A549 (cell line): ENCODE measurements at regions of chr11 and their contacts with region 1.

Region 1: GRCh38 chr11:72413914-72414628 is 20.3 kb downstream of the CLPB start:
- DNase-seq: peak; percentile 76 to 81
- ATAC-seq: peak; percentile 83 to 92
- H3K4me3 ChIP-seq: no peak overlapping the region
- H3K27ac ChIP-seq: 0 out of 6 replicates have a peak overlapping the region, but pooled peaks of 1 of the 2 experiments have one; percentile 13
- H3K4me1 ChIP-seq: peaks cover 4% of the 10 kb centered on the region; the same call in 2 of the 3 replicates
- CTCF ChIP-seq: peak; percentile 92
- EP300 ChIP-seq: no peak
- POLR2A ChIP-seq: no peak
- RAD21 ChIP-seq: peak; percentile 82 to 83

Region 2: GRCh38 chr11:72132646-72133045 is 281.4 kb before region 1 on chr11:
- CTCF ChIA-PET with region 1: no interaction called
- POLR2A ChIA-PET with region 1: no interaction called
- DNase-seq: no peak
- ATAC-seq: no peak
- H3K4me3 ChIP-seq: no peak overlapping the region
- H3K27ac ChIP-seq: no peak overlapping the region
- H3K4me1 ChIP-seq: no peaks in the 10 kb centered on the region
- CTCF ChIP-seq: no peak
- EP300 ChIP-seq: no peak
- POLR2A ChIP-seq: no peak
- RAD21 ChIP-seq: no peak

Region 3: GRCh38 chr11:72238040-72238450 is 176.0 kb before region 1 on chr11:
- CTCF ChIA-PET with region 1: interaction called, 11 read pairs
- POLR2A ChIA-PET with region 1: interaction called, 3 read pairs
- DNase-seq: peak; percentile 82 to 92
- ATAC-seq: peak; percentile 70 to 86
- H3K4me3 ChIP-seq: no peak overlapping the region
- H3K27ac ChIP-seq: no peak overlapping the region
- H3K4me1 ChIP-seq: peaks cover 12% of the 10 kb centered on the region
- CTCF ChIP-seq: peak; percentile 71
- EP300 ChIP-seq: no peak
- POLR2A ChIP-seq: no peak
- RAD21 ChIP-seq: peak; percentile 63 to 65

Region 4: DNA sequence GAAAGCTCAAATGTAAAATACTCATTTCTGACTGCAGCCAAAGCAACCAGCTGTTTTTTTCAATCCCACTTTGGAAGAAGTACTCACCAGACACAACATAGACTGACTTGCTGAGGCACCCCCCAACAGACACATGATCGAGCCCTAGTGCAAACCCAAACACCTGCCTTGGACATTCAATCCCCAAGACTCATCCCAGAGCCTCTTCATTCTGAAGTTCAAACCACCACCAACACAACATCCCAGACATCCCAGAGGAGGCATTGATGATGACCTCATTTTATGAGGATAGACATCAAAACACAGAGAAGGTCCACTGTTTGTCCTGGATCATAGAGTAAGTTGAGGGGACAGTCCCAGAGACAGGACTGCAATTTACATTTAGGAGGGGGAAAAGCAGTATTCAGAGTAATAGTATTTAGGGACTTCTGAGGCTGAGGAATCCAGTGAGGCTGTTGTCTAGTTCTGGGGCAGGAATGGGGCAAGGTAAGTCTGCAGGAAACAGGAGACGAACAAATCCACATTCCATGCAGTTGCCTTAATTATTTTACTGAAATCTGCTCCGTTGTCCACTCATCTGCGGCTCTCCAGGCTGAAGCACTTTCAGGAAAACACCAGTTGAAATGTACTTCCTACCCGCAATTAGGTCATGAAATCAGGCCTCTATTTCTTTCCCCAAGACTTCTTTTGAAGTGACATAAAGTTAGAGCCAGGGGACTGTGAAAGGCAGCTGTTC is 34.5 kb before region 1 on chr11:
- CTCF ChIA-PET with region 1: interaction called, 10 read pairs
- POLR2A ChIA-PET with region 1: no interaction called
- DNase-seq: no peak
- ATAC-seq: no peak
- H3K4me3 ChIP-seq: no peak overlapping the region
- H3K27ac ChIP-seq: no peak overlapping the region
- H3K4me1 ChIP-seq: no peaks in the 10 kb centered on the region
- CTCF ChIP-seq: no peak
- EP300 ChIP-seq: no peak
- POLR2A ChIP-seq: no peak
- RAD21 ChIP-seq: no peak

Region 5: DNA sequence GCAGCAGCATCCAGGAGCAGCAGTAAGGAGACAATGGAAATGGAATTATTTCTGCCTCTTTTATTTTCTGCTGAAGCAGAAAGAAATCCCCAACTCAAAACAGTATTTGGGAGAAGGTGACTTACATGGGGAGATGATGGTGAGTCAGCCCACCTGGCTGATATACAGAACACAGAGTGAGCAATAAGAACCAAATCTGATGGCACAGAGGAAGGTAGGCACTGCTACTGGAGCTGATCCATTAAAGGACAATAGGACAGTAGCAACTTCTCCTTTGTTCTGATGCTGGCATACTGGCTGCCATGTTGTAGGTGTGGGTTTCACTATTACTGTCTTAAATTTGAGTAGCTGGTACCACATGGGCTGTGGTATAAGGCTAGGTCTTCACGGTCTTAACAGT is 25.0 kb before region 1 on chr11:
- CTCF ChIA-PET with region 1: interaction called, 57 read pairs
- POLR2A ChIA-PET with region 1: no interaction called
- DNase-seq: no peak
- ATAC-seq: no peak
- H3K4me3 ChIP-seq: no peak overlapping the region
- H3K27ac ChIP-seq: no peak overlapping the region
- H3K4me1 ChIP-seq: no peaks in the 10 kb centered on the region
- CTCF ChIP-seq: no peak
- EP300 ChIP-seq: no peak
- POLR2A ChIP-seq: no peak
- RAD21 ChIP-seq: no peak

Region 6: DNA sequence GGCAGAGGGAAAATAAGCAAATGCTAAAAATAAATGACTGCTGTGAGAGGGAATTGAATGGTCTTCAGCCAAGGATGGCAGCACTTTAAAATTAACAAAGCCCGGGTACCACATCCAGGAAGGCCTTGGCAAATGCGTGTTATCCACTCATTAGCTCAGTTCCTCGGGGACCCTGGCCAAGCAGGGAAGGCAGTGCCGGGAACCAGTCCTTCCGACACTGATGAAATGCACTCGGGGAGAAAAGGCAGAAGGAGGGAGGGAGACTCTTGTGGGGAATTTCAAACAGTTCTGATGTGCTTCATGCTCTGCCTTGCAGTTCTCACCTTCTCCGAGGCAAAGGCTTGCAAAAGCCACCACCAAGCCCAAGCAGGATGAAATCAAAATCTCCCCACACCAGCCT is 18.0 kb before region 1 on chr11:
- CTCF ChIA-PET with region 1: interaction called, 57 read pairs
- POLR2A ChIA-PET with region 1: no interaction called
- DNase-seq: no peak
- ATAC-seq: no peak
- H3K4me3 ChIP-seq: no peak overlapping the region
- H3K27ac ChIP-seq: no peak overlapping the region
- H3K4me1 ChIP-seq: no peaks in the 10 kb centered on the region
- CTCF ChIP-seq: no peak
- EP300 ChIP-seq: no peak
- POLR2A ChIP-seq: no peak
- RAD21 ChIP-seq: no peak

Region 7: GRCh38 chr11:72425053-72425980 is 11.2 kb after region 1 on chr11:
- CTCF ChIA-PET with region 1: interaction called, 256 read pairs
- POLR2A ChIA-PET with region 1: no interaction called
- DNase-seq: no peak
- ATAC-seq: no peak
- H3K4me3 ChIP-seq: no peak overlapping the region
- H3K27ac ChIP-seq: no peak overlapping the region
- H3K4me1 ChIP-seq: peaks cover 13% of the 10 kb centered on the region; the same call in 2 of the 3 replicates
- CTCF ChIP-seq: no peak
- EP300 ChIP-seq: no peak
- POLR2A ChIP-seq: no peak
- RAD21 ChIP-seq: no peak

Region 8: GRCh38 chr11:72430741-72431570 is 16.9 kb after region 1 on chr11:
- CTCF ChIA-PET with region 1: interaction called, 256 read pairs
- POLR2A ChIA-PET with region 1: no interaction called
- DNase-seq: peak; percentile 64 to 66
- ATAC-seq: peak; percentile 36 to 61; a peak in 5 of 6 replicates
- H3K4me3 ChIP-seq: no peak overlapping the region
- H3K27ac ChIP-seq: no peak overlapping the region
- H3K4me1 ChIP-seq: 0 out of 3 replicates have a peak, but pooled peaks cover 3% of the 10 kb centered on the region
- CTCF ChIP-seq: peak; percentile 78
- EP300 ChIP-seq: no peak
- POLR2A ChIP-seq: no peak
- RAD21 ChIP-seq: peak; percentile 82 to 87

Region 9: GRCh38 chr11:72478659-72479058 is 64.6 kb after region 1 on chr11:
- CTCF ChIA-PET with region 1: no interaction called
- POLR2A ChIA-PET with region 1: no interaction called
- DNase-seq: no peak
- ATAC-seq: no peak
- H3K4me3 ChIP-seq: no peak overlapping the region
- H3K27ac ChIP-seq: no peak overlapping the region
- H3K4me1 ChIP-seq: 0 out of 3 replicates have a peak, but pooled peaks cover 3% of the 10 kb centered on the region
- CTCF ChIP-seq: no peak
- EP300 ChIP-seq: no peak
- POLR2A ChIP-seq: no peak
- RAD21 ChIP-seq: no peak

Region 10: DNA sequence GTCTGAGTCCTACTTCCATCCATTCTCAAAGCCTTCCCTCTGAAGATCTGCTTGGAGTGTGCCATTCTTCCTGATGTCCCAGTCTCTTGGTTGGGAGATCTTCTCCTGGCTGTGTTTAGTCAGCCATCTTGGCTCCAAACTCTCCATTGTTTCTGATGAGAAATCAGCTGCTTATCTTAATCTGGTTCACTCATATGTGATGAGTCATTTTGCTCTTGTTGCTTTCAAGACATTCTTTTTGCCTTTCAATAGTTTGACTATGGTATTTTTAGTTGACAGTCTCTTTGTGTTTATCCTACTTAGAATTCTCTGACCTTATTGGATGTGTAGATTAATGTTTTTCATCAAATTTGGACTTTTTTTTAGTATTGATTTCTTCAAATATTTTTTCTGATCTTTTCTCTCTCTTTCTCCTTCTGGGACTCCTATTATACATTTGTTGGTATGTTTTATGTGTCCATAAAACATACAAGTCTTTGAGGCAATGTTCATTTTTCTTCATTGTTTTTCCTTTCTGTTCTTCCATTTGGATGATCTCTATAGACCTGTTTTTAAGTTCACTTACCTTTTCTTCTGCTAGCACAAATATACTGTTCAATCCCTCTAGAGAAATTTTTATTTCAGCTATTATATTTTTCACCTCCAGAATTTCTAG is 97.4 kb after region 1 on chr11:
- CTCF ChIA-PET with region 1: no interaction called
- POLR2A ChIA-PET with region 1: no interaction called
- DNase-seq: peak in 1 of 2 experiments; percentile 14
- ATAC-seq: no peak
- H3K4me3 ChIP-seq: no peak overlapping the region
- H3K27ac ChIP-seq: no peak overlapping the region
- H3K4me1 ChIP-seq: no peaks in the 10 kb centered on the region
- CTCF ChIP-seq: no peak
- EP300 ChIP-seq: no peak
- POLR2A ChIP-seq: no peak
- RAD21 ChIP-seq: no peak

Region 11: DNA sequence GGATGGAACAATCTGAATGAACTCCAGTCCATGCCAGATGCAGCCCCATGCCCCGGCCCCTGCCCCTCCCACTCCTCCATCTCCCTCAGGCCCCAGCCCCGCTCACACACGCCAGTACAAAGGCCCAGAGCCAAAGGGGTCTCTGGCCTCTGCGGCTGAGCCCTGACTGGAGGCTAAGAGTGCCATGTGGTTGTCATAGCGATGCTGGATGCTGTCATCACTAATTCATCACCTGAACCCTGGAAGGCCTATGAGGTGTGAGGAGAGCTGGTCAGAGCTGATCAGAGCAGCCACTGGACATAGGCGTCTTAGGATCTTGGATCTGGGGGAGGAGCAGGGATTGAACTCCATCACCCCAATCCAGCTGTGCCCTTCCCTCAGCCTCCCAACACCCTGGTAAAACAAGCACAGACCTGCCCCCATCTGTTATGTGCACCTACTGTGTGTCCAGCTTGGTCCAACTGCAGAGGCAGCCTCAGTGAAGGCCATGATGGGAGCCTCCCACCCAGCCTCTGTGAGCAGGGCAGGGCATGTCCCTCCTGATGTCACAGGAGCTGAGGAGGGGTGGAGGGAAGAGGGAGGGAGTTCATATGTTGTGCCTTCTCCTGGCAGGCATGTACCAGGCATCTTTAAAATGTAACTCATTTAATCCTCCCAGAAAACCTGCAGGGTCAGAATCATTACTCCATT is 243.5 kb after region 1 on chr11:
- CTCF ChIA-PET with region 1: no interaction called
- POLR2A ChIA-PET with region 1: no interaction called
- DNase-seq: no peak
- ATAC-seq: no peak
- H3K4me3 ChIP-seq: no peak overlapping the region
- H3K27ac ChIP-seq: no peak overlapping the region
- H3K4me1 ChIP-seq: no peaks in the 10 kb centered on the region
- CTCF ChIP-seq: no peak
- EP300 ChIP-seq: no peak
- POLR2A ChIP-seq: no peak
- RAD21 ChIP-seq: no peak